CD14-positive monocyte (primary cell): ENCODE measurements at regions of chr10 and their contacts with region 1.

Region 1: GRCh38 chr10:30557884-30558283 is 71.7 kb downstream of the LYZL2 start:
- DNase-seq: peak; percentile 71 to 96 (median 91)
- H3K4me3 ChIP-seq: peak overlapping the region in 1 of 3 experiments; percentile 5
- H3K4me3 Mint-ChIP-seq: peak overlapping the region; percentile 3 to 20
- H3K27ac ChIP-seq: peak overlapping the region; percentile 76
- H3K27ac Mint-ChIP-seq: peak overlapping the region; percentile 93 to 99 (median 97)
- H3K4me1 ChIP-seq: peaks cover 66 to 80% of the 10 kb centered on the region in 2 donors
- H3K4me1 Mint-ChIP-seq: peaks cover 68% of the 10 kb centered on the region
- H3K27me3 ChIP-seq: no peaks in the 10 kb centered on the region
- H3K27me3 Mint-ChIP-seq: peaks cover 0 to 3% (median 0%) of the 10 kb centered on the region in 3 donors
- CTCF ChIP-seq: no peak

Region 2: GRCh38 chr10:30542001-30542894 is 15.6 kb before region 1 on chr10:
- intact Hi-C with region 1: loop called in 1 of 2 experiments (anchors 2 kb)
- DNase-seq: peak; percentile 92 to 99 (median 97)
- H3K4me3 ChIP-seq: peak overlapping the region in 1 of 3 experiments; percentile 36
- H3K4me3 Mint-ChIP-seq: peak overlapping the region; percentile 11 to 69
- H3K27ac ChIP-seq: peak overlapping the region; percentile 77 to 94
- H3K27ac Mint-ChIP-seq: peak overlapping the region; percentile 90 to 98 (median 93)
- H3K4me1 ChIP-seq: peaks cover 76 to 90% of the 10 kb centered on the region in 2 donors
- H3K4me1 Mint-ChIP-seq: peaks cover 76% of the 10 kb centered on the region
- H3K27me3 ChIP-seq: no peaks in the 10 kb centered on the region
- H3K27me3 Mint-ChIP-seq: peaks cover 0 to 2% (median 0%) of the 10 kb centered on the region in 3 donors
- CTCF ChIP-seq: no peak

Region 3: DNA sequence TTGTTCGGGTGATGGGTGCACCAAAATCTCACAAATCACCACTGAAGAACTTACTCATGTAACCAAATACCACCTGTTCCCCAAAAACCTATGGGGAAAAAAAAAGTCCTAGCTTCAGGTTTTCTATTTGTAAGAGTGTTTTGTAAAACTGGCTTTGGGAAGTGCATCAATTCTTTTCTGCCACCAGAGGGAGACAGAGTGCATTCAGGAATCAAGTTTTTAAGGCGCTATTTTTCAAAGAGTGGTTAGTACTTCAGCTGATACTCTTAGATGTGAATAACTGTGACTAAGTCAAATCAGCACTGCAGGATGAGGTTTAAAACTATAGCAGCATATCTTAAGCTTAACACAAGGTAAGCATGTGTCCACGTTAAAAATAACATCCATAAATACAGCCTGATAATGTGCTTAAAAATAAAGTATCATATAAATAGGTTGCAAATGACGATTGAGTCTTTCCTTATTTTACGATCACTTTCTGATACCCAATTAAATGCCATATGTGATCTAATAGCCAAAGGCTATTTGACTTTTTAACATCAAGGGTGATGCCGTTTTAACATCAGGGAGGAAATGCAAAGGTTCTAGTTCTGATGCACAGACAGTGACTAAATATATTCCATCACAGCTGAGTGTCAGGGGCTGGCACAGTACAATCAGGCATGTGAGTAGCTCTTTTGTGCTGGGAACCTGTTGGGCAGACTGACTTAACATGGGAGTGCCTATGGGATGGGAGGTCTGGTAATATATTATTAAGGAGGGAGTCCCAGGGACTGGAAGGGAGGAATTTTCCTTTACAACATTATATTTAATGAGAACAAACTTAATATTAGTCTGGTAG is 82.3 kb after region 1 on chr10:
- intact Hi-C with region 1: no loop called
- DNase-seq: peak; percentile 38 to 55 (median 40)
- H3K4me3 ChIP-seq: no peak overlapping the region
- H3K4me3 Mint-ChIP-seq: no peak overlapping the region
- H3K27ac ChIP-seq: no peak overlapping the region
- H3K27ac Mint-ChIP-seq: peak overlapping the region in 1 of 7 donors; percentile 25
- H3K4me1 ChIP-seq: no peaks in the 10 kb centered on the region
- H3K4me1 Mint-ChIP-seq: peaks cover 8% of the 10 kb centered on the region
- H3K27me3 ChIP-seq: peaks cover 7 to 13% of the 10 kb centered on the region in 2 donors
- H3K27me3 Mint-ChIP-seq: peaks cover 27 to 30% (median 28%) of the 10 kb centered on the region in 3 donors
- CTCF ChIP-seq: peak; percentile 86